IMR-90 (cell line): ENCODE measurements at regions of chr9 and their contacts with region 1.

Region 1: GRCh38 chr9:26656003-26656870 is 236.4 kb downstream of the CAAP1 start:
- DNase-seq: peak; percentile 15
- ATAC-seq: peak; percentile 66
- H3K4me3 ChIP-seq: no peak overlapping the region
- H3K27ac ChIP-seq: no peak overlapping the region
- H3K4me1 ChIP-seq: no peaks in the 10 kb centered on the region
- H3K27me3 ChIP-seq: no peaks in the 10 kb centered on the region
- CTCF ChIP-seq: peak; percentile 32
- POLR2A ChIP-seq: no peak
- RAD21 ChIP-seq: peak; percentile 33

Region 2: DNA sequence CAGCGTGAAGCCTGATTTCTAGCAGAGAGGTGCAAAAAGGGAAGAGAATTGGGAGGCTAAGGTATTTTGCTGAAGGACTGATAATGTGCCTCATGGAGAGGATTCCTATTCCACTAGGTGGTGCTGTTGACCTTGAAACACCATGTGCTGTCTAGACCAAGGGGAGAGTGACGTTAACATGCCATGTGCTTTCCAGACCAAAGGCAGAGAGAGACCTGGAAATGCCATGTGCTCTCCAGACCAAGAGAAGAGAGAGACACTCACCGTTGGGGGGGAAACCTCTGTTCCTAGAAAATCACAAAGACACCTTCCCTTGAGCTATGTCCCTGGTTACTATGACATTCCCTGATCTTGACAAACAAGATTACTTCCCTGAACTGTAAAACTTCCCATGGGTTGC is 692.0 kb before region 1 on chr9:
- CTCF ChIA-PET with region 1: no interaction called
- POLR2A ChIA-PET with region 1: no interaction called
- dilution Hi-C with region 1: no loop called
- in situ Hi-C with region 1: no loop called
- intact Hi-C with region 1: loop called (anchors 1 kb)
- DNase-seq: peak; percentile 82
- ATAC-seq: peak; percentile 57
- H3K4me3 ChIP-seq: no peak overlapping the region
- H3K27ac ChIP-seq: no peak overlapping the region
- H3K4me1 ChIP-seq: no peaks in the 10 kb centered on the region
- H3K27me3 ChIP-seq: no peaks in the 10 kb centered on the region
- CTCF ChIP-seq: peak; percentile 82
- POLR2A ChIP-seq: no peak
- RAD21 ChIP-seq: peak; percentile 92